Right ventricle myocardium inferior (tissue), 1 donor: ENCODE measurements at regions of chr14 and their contacts with region 1.

Region 1: GRCh38 chr14:72617391-72618031 is 276.4 kb downstream of the DPF3 start:
- DNase-seq: no peak
- ATAC-seq: peak; percentile 47

Region 2: GRCh38 chr14:72560331-72560730 is 57.2 kb before region 1 on chr14:
- intact Hi-C with region 1: loop called (anchors 5 kb)
- DNase-seq: no peak
- ATAC-seq: no peak

Region 3: GRCh38 chr14:72893636-72894321 is 276.3 kb after region 1 on chr14 and contains the start of gene DPF3:
- intact Hi-C with region 1: loop called (anchors 5 kb)
- DNase-seq: peak; percentile 98
- ATAC-seq: peak; percentile 98
- total RNA-seq, gene DPF3: 27.3 TPM

Region 4: GRCh38 chr14:72904840-72905561 is 287.5 kb after region 1 on chr14:
- intact Hi-C with region 1: loop called (anchors 5 kb)
- DNase-seq: no peak
- ATAC-seq: peak; percentile 76